Sigmoid colon (tissue), 7 donors: ENCODE measurements at regions of chr15 and their contacts with region 1.

Region 1: GRCh38 chr15:70825841-70826240 is 28.1 kb downstream of the LARP6 start:
- DNase-seq: no peak
- H3K4me3 ChIP-seq: no peak overlapping the region
- H3K27ac ChIP-seq: peak overlapping the region in 1 of 4 donors; percentile 11
- H3K4me1 ChIP-seq: peaks cover 0 to 5% (median 0%) of the 10 kb centered on the region in 4 donors
- H3K27me3 ChIP-seq: no peaks in the 10 kb centered on the region
- CTCF ChIP-seq: no peak
- EP300 ChIP-seq: no peak
- POLR2A ChIP-seq: no peak

Region 2: GRCh38 chr15:70466895-70467529 is 358.8 kb before region 1 on chr15:
- intact Hi-C with region 1: no loop called
- DNase-seq: peak; percentile 75
- H3K4me3 ChIP-seq: no peak overlapping the region
- H3K27ac ChIP-seq: no peak overlapping the region
- H3K4me1 ChIP-seq: no peaks in the 10 kb centered on the region
- H3K27me3 ChIP-seq: no peaks in the 10 kb centered on the region
- CTCF ChIP-seq: peak; percentile 21 to 69 (median 56)
- EP300 ChIP-seq: no peak
- POLR2A ChIP-seq: no peak

Region 3: DNA sequence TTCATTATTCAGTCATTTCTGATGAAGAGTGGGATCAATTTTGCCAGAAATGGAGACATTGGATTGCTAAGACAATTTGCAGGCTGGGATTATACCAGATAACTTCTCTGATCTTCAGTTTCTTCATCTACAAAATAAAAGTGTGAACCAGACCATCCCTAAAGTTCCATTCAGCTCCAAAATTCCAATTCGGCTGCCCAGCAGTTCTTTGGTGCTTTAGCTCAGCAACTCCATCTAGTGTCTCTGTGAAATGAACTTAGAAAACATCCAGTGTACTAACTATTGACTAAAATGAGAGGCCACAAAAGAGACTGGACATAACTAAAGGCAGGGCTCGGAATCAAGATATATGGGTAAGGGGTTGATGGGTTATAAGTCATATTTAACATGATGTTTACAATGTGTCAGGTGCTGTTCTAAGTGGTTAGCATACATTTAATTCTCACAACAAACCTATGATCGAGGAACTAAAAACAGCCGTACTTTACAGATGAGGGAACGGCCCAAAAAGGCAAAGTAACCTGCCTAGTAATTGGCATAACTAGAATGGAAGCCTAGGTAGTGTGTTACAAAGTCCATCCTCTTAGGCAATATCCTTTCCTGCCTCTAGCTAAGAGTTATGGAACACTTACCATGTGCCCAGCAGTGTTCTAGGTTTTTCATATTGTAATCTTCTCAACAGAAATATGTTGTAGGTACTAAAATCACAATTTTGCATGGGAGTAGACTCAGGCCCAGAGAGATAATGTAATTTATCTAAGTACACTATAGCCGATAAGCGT is 49.4 kb after region 1 on chr15:
- intact Hi-C with region 1: loop called (anchors 2 kb)
- DNase-seq: no peak
- H3K4me3 ChIP-seq: no peak overlapping the region
- H3K27ac ChIP-seq: no peak overlapping the region
- H3K4me1 ChIP-seq: peaks cover 0 to 5% (median 2%) of the 10 kb centered on the region in 4 donors
- H3K27me3 ChIP-seq: no peaks in the 10 kb centered on the region
- CTCF ChIP-seq: no peak
- EP300 ChIP-seq: no peak
- POLR2A ChIP-seq: no peak

Region 4: GRCh38 chr15:71195240-71195639 is 369.4 kb after region 1 on chr15:
- intact Hi-C with region 1: no loop called
- DNase-seq: no peak
- H3K4me3 ChIP-seq: no peak overlapping the region
- H3K27ac ChIP-seq: no peak overlapping the region
- H3K4me1 ChIP-seq: no peaks in the 10 kb centered on the region
- H3K27me3 ChIP-seq: no peaks in the 10 kb centered on the region
- CTCF ChIP-seq: no peak
- EP300 ChIP-seq: no peak
- POLR2A ChIP-seq: no peak